ENCODE measurements at regions of chr5 and their contacts with region 1.

Region 1: GRCh38 chr5:57184322-57184721 is 10.5 kb downstream of the GPBP1 start:
- DNase-seq: no peak
- H3K4me3 ChIP-seq: no peak overlapping the region
- H3K27ac ChIP-seq: no peak overlapping the region
- H3K4me1 ChIP-seq: peaks cover 0 to 14% (median 10%) of the 10 kb centered on the region in 4 experiments; a peak in 5 of 7 replicates
- H3K27me3 ChIP-seq: no peaks in the 10 kb centered on the region
- CTCF ChIP-seq: peak; percentile 21 to 40 (median 24); a peak in 3 of 4 replicates
- EP300 ChIP-seq: peak in 1 of 2 experiments; percentile 21; a peak in 1 of 3 replicates
- POLR2A ChIP-seq: no peak
- RAD21 ChIP-seq: peak; percentile 50 to 55

Region 2: GRCh38 chr5:57173185-57174127 is 10.9 kb before region 1 on chr5 and contains the start of gene GPBP1:
- CTCF ChIA-PET with region 1: interaction called, 7 read pairs
- POLR2A ChIA-PET with region 1: interaction called, 17 read pairs
- DNase-seq: peak; percentile 91 to 97
- H3K4me3 ChIP-seq: peak within 1 kb of the TSS; percentile 94 to 99 (median 96)
- H3K27ac ChIP-seq: peak within 1 kb of the TSS; percentile 99
- H3K4me1 ChIP-seq: peaks cover 0 to 3% (median 1%) of the 10 kb centered on the region in 4 experiments; a peak in 2 of 7 replicates
- H3K27me3 ChIP-seq: no peaks in the 10 kb centered on the region
- CTCF ChIP-seq: no peak
- EP300 ChIP-seq: peak in 1 of 2 experiments; percentile 71; a peak in 1 of 3 replicates
- POLR2A ChIP-seq: peak; percentile 60 to 86; a peak in 2 of 3 replicates
- RAD21 ChIP-seq: no peak
- total RNA-seq, gene GPBP1: 104 and 108 TPM in 2 replicates

Region 3: GRCh38 chr5:57202811-57203210 is 18.5 kb after region 1 on chr5:
- CTCF ChIA-PET with region 1: interaction called, 10 read pairs
- POLR2A ChIA-PET with region 1: interaction called, 5 read pairs
- DNase-seq: no peak
- H3K4me3 ChIP-seq: no peak overlapping the region
- H3K27ac ChIP-seq: no peak overlapping the region
- H3K4me1 ChIP-seq: peaks cover 4 to 10% (median 6%) of the 10 kb centered on the region in 4 experiments; a peak in 6 of 7 replicates
- H3K27me3 ChIP-seq: no peaks in the 10 kb centered on the region
- CTCF ChIP-seq: no peak
- EP300 ChIP-seq: no peak
- POLR2A ChIP-seq: no peak
- RAD21 ChIP-seq: no peak

Measured in H1 (cell line).